ENCODE measurements at regions of chr5 and their contacts with region 1.

Region 1: GRCh38 chr5:135232958-135233357 is 166.1 kb downstream of the MACROH2A1 start:
- DNase-seq: no peak
- H3K4me3 ChIP-seq: no peak overlapping the region
- H3K27ac ChIP-seq: no peak overlapping the region
- H3K4me1 ChIP-seq: no peaks in the 10 kb centered on the region
- H3K27me3 ChIP-seq: no peaks in the 10 kb centered on the region
- CTCF ChIP-seq: no peak

Region 2: GRCh38 chr5:134614450-134615085 is 618.4 kb before region 1 on chr5:
- CTCF ChIA-PET with region 1: no interaction called
- POLR2A ChIA-PET with region 1: interaction called, 17 read pairs
- intact Hi-C with region 1: no loop called
- DNase-seq: no peak
- H3K4me3 ChIP-seq: no peak overlapping the region
- H3K27ac ChIP-seq: no peak overlapping the region
- H3K4me1 ChIP-seq: no peaks in the 10 kb centered on the region
- H3K27me3 ChIP-seq: no peaks in the 10 kb centered on the region
- CTCF ChIP-seq: no peak

Region 3: GRCh38 chr5:135271533-135272310 is 38.8 kb after region 1 on chr5:
- CTCF ChIA-PET with region 1: no interaction called
- POLR2A ChIA-PET with region 1: no interaction called
- intact Hi-C with region 1: no loop called
- DNase-seq: no peak
- H3K4me3 ChIP-seq: no peak overlapping the region
- H3K27ac ChIP-seq: no peak overlapping the region
- H3K4me1 ChIP-seq: no peaks in the 10 kb centered on the region
- H3K27me3 ChIP-seq: no peaks in the 10 kb centered on the region
- CTCF ChIP-seq: no peak

Region 4: GRCh38 chr5:135308752-135309151 is 75.8 kb after region 1 on chr5:
- CTCF ChIA-PET with region 1: interaction called, 14 read pairs
- POLR2A ChIA-PET with region 1: no interaction called
- intact Hi-C with region 1: no loop called
- DNase-seq: no peak
- H3K4me3 ChIP-seq: no peak overlapping the region
- H3K27ac ChIP-seq: no peak overlapping the region
- H3K4me1 ChIP-seq: peaks cover 8% of the 10 kb centered on the region; the same call in 1 of the 2 replicates
- H3K27me3 ChIP-seq: no peaks in the 10 kb centered on the region
- CTCF ChIP-seq: no peak